ENCODE measurements at regions of chr6 and their contacts with region 1.

Region 1: GRCh38 chr6:12060780-12061619 is 48.9 kb downstream of the HIVEP1 start:
- DNase-seq: peak; percentile 93
- H3K4me3 Mint-ChIP-seq: peak overlapping the region; percentile 84
- H3K27ac Mint-ChIP-seq: peak overlapping the region; percentile 92
- H3K4me1 Mint-ChIP-seq: peaks cover 68% of the 10 kb centered on the region
- H3K27me3 Mint-ChIP-seq: no peaks in the 10 kb centered on the region

Region 2: DNA sequence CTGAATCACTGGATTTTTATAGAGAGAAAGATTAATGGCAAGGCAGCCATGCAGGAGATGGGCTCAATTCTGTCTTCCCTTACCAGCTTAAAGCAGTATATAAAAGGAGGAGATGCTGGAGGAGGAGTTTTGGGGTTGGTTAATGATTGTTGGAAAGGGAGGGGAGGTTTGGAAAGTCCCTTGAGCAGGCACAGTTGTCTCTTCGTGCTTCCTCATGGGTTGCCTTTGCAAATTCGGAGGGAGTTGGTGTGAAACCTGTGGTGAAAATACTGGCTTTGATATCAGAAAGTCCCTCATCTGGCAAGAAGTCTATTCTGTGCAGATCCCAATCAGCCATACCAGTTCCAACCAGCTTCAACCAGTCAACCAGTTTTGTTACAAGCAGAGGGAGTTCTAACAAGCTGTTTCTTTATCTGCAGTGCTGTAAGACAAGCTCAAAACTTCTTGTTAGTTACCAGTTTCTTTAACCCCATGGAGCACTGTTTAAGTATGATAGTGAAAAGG is 58.1 kb after region 1 on chr6:
- intact Hi-C with region 1: loop called (anchors 2 kb)
- DNase-seq: peak; percentile 92
- H3K4me3 Mint-ChIP-seq: peak overlapping the region; percentile 41
- H3K27ac Mint-ChIP-seq: peak overlapping the region; percentile 78
- H3K4me1 Mint-ChIP-seq: peaks cover 64% of the 10 kb centered on the region
- H3K27me3 Mint-ChIP-seq: no peaks in the 10 kb centered on the region

Measured in activated CD4-positive, alpha-beta T cell treated with anti-CD3 and anti-CD28 coated beads, Interleukin-2, amount 10 ng/mL, durations not matched to agents 24 days and 14 days (primary cell).